Heart left ventricle (tissue), 16 donors: ENCODE measurements at regions of chr2 and their contacts with region 1.

Region 1: GRCh38 chr2:102172745-102173144 is 14.1 kb upstream of the IL1RL2 start:
- DNase-seq: no peak
- ATAC-seq: no peak
- H3K4me3 ChIP-seq: no peak overlapping the region
- H3K27ac ChIP-seq: no peak overlapping the region
- H3K4me1 ChIP-seq: peaks cover 0 to 10% (median 0%) of the 10 kb centered on the region in 12 donors
- H3K27me3 ChIP-seq: no peaks in the 10 kb centered on the region
- CTCF ChIP-seq: no peak
- POLR2A ChIP-seq: no peak

Region 2: GRCh38 chr2:101883863-101884262 is 288.9 kb before region 1 on chr2:
- intact Hi-C with region 1: loop called in 1 of 10 experiments (anchors 10 kb)
- DNase-seq: no peak
- ATAC-seq: peak in 3 of 4 donors; percentile 65 to 79 (median 77)
- H3K4me3 ChIP-seq: no peak overlapping the region
- H3K27ac ChIP-seq: peak overlapping the region in 1 of 12 donors; percentile 25
- H3K4me1 ChIP-seq: peaks cover 0 to 35% (median 17%) of the 10 kb centered on the region in 12 donors
- H3K27me3 ChIP-seq: no peaks in the 10 kb centered on the region
- CTCF ChIP-seq: peak; percentile 33 to 68 (median 54)
- POLR2A ChIP-seq: no peak

Region 3: DNA sequence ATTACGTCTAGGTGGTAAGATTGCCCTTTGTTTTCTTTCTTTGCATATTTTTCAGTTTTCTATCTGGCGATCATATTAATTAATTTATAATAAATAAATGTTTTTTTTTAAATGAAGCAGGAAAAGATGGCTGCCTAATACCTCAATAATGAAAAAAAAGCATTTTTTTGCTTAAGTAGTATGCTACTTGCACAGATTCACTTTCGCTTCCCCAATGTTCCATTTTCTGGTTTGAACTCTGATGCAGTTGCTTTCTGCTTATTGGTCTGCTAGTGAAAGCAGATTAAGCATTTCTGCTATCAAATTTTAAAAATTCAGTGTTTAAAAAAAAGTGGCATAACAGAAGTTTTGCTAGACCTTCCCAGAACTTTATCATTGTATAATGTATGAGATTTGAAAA is 577.2 kb after region 1 on chr2:
- intact Hi-C with region 1: no loop called
- DNase-seq: no peak
- ATAC-seq: no peak
- H3K4me3 ChIP-seq: no peak overlapping the region
- H3K27ac ChIP-seq: no peak overlapping the region
- H3K4me1 ChIP-seq: peaks cover 0 to 6% (median 0%) of the 10 kb centered on the region in 12 donors
- H3K27me3 ChIP-seq: no peaks in the 10 kb centered on the region
- CTCF ChIP-seq: no peak
- POLR2A ChIP-seq: no peak